ENCODE measurements at regions of chrX and their contacts with region 1.

Region 1: DNA sequence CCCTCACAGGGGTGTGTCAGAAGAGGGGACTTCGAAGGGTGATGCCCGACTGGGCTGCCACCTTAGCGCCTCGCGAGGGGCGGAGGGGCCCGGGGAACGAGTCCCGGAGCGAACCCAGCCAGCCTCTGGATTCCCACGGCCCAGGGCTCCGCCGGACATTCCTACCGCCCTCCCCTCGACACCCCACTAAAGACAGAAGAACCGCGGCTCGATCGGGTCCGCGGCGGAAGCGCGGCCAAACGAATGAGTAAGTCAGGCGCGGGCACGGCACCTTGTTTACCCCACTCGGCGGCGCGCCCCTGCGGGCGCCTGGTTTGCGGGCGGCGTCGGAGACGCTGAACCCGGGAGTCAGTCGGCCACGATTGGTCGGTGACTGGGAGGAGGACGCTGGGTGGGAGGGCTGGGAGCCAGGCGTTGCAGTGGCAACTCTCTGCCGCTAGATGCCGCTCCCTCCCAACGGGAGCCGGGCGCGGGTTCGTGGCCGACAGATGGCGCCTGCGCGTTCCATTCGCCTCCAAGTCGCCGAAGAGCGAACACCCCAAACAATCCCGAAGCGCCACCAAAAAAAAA is 1.4 kb upstream of the STAG2 start:
- DNase-seq: peak; percentile 83 to 89
- ATAC-seq: peak; percentile 56 to 64
- H3K4me3 ChIP-seq: peak overlapping the region; percentile 78 to 85 (median 81)
- H3K27ac ChIP-seq: peak overlapping the region; percentile 95 to 99 (median 98)
- H3K4me1 ChIP-seq: peaks cover 2 to 8% of the 10 kb centered on the region in 2 donors
- H3K27me3 ChIP-seq: no peaks in the 10 kb centered on the region
- CTCF ChIP-seq: peak; percentile 82 to 92 (median 90)
- POLR2A ChIP-seq: peak; percentile 86 to 91

Region 2: GRCh38 chrX:123833387-123833786 is 126.7 kb before region 1 on chrX:
- in situ Hi-C with region 1: loop called in 1 of 4 experiments (anchors 10 kb)
- intact Hi-C with region 1: loop called (anchors 5 kb)
- DNase-seq: peak; percentile 6 to 36
- ATAC-seq: peak; percentile 92 to 95
- H3K4me3 ChIP-seq: no peak overlapping the region
- H3K27ac ChIP-seq: peak overlapping the region in 1 of 4 donors; percentile 56
- H3K4me1 ChIP-seq: no peaks in the 10 kb centered on the region
- H3K27me3 ChIP-seq: no peaks in the 10 kb centered on the region
- CTCF ChIP-seq: peak; percentile 47 to 75 (median 71)
- POLR2A ChIP-seq: no peak

Region 3: DNA sequence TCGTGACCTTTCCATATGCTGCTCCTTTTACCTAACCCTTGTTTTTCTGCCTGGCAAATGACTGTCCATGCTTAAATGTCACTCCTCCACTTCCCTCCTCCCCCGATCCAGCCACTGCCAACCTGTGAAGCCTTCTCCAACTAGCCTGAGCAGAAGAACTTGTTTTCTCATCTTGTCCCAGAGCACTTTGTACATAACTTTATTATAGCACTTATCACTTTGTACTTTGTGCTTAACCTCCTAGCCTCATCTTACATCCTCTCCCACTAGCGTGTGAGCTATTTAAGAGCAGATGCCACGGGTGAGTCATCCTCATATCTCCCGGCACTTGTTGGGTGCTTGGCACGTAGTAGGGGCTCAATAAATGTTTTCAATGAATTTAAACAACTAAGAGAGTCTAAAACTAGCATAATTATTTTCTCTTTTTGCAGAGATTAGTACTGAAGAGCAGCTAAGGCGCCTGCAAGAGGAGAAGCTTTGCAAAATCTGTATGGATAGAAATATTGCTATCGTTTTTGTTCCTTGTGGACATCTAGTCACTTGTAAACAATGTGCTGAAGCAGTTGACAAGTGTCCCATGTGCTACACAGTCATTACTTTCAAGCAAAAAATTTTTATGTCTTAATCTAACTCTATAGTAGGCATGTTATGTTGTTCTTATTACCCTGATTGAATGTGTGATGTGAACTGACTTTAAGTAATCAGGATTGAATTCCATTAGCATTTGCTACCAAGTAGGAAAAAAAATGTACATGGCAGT is 53.4 kb before region 1 on chrX:
- in situ Hi-C with region 1: no loop called
- intact Hi-C with region 1: loop called (anchors 5 kb)
- DNase-seq: peak; percentile 12 to 46
- ATAC-seq: peak; percentile 86 to 93
- H3K4me3 ChIP-seq: no peak overlapping the region
- H3K27ac ChIP-seq: peak overlapping the region; percentile 47 to 81 (median 73)
- H3K4me1 ChIP-seq: peaks cover 0 to 19% of the 10 kb centered on the region in 2 donors
- H3K27me3 ChIP-seq: no peaks in the 10 kb centered on the region
- CTCF ChIP-seq: no peak
- POLR2A ChIP-seq: no peak

Region 4: DNA sequence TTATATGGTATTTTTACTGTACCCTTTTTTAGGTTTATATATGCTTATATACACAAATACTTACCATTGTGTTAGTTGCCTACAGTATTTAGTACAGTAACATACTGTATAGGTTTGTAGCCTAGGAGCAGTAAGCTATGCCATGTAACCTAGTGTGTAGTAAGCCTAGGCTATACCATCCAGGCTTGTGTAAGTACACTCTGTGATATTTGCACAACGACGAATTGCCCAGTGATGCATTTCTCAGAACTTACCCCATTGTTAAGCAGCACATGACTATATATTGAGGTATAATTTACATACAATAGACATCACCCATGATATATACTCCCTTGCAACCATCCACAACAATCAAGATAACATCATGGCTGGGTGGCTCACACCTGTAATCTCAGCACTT is 41.5 kb after region 1 on chrX:
- in situ Hi-C with region 1: no loop called
- intact Hi-C with region 1: no loop called
- DNase-seq: no peak
- ATAC-seq: no peak
- H3K4me3 ChIP-seq: no peak overlapping the region
- H3K27ac ChIP-seq: no peak overlapping the region
- H3K4me1 ChIP-seq: peaks cover 0 to 3% of the 10 kb centered on the region in 2 donors
- H3K27me3 ChIP-seq: no peaks in the 10 kb centered on the region
- CTCF ChIP-seq: no peak
- POLR2A ChIP-seq: no peak

Region 5: DNA sequence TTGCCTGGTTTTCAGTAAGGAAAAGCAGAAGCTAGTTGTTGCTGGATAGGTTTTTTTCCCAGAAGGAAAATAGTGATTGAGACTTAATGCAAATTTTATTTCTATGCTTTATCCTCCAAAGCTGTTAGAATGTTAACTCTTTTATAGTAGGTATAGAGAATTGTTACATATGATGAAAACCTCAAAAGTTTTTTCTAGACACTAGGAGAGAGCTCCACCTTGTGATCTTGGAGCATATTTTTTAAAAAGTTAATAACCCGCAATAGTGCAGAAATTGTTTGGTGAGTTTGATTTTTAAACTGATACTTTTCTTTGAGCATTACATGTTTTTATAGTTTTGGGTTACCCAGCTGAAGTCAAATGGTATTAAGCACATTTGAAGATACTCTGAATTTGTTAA is 57.9 kb after region 1 on chrX:
- in situ Hi-C with region 1: no loop called
- intact Hi-C with region 1: loop called (anchors 1 kb)
- DNase-seq: no peak
- ATAC-seq: no peak
- H3K4me3 ChIP-seq: no peak overlapping the region
- H3K27ac ChIP-seq: no peak overlapping the region
- H3K4me1 ChIP-seq: peaks cover 3 to 13% of the 10 kb centered on the region in 2 donors
- H3K27me3 ChIP-seq: no peaks in the 10 kb centered on the region
- CTCF ChIP-seq: no peak
- POLR2A ChIP-seq: no peak

Region 6: GRCh38 chrX:124045109-124045508 is 85.0 kb after region 1 on chrX:
- in situ Hi-C with region 1: loop called in 1 of 4 experiments (anchors 25 kb)
- intact Hi-C with region 1: no loop called
- DNase-seq: no peak
- ATAC-seq: no peak
- H3K4me3 ChIP-seq: no peak overlapping the region
- H3K27ac ChIP-seq: no peak overlapping the region
- H3K4me1 ChIP-seq: no peaks in the 10 kb centered on the region
- H3K27me3 ChIP-seq: no peaks in the 10 kb centered on the region
- CTCF ChIP-seq: no peak
- POLR2A ChIP-seq: no peak